ENCODE measurements at regions of chr1 and their contacts with region 1.

Region 1: DNA sequence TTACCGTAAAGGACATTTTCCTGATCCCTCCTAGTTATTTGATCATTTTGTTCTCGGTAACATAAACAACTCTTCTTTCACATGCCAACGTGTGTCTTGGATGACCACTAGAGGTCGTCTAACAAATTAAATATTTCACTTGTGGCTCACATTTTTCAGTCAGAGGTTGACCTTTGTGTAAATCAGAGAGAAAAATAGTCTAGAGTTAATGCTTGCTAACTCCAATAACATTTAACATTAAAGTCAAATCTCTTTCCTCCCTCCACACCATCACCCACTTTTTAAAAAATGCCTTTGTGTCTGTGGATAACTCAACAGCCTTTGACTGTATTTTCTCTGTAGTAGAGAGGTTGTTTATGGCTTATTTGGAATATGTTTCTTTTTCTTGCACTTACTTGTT is 220.5 kb upstream of the B3GALT2 start:
- DNase-seq: peak; percentile 72
- ATAC-seq: peak; percentile 66
- H3K4me3 ChIP-seq: no peak overlapping the region
- H3K27ac ChIP-seq: no peak overlapping the region
- H3K4me1 ChIP-seq: no peaks in the 10 kb centered on the region; the same call in 1 of the 2 replicates
- H3K27me3 ChIP-seq: no peaks in the 10 kb centered on the region
- CTCF ChIP-seq: peak; percentile 71
- POLR2A ChIP-seq: no peak
- RAD21 ChIP-seq: peak; percentile 56

Region 2: DNA sequence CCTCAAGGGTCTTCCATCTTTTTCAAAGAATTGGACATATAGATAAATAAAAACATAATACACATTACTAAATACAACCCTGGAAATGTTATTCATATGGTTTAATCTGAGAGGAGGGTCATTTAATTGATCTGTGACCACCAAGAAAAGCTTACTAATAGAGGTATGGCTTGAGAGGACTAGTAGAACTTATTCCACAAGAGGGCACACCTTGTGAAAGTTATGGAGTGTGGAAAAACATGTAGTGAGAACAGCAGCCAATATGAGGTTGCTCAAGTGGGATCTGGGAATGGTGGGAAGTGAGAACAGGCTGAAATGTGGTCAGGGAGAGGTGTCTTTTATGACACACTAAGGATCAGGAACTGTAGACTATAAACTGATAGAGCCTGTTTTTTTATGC is 753.0 kb after region 1 on chr1:
- CTCF ChIA-PET with region 1: no interaction called
- POLR2A ChIA-PET with region 1: no interaction called
- dilution Hi-C with region 1: no loop called
- in situ Hi-C with region 1: no loop called
- intact Hi-C with region 1: loop called (anchors 10 kb)
- DNase-seq: peak; percentile 10
- ATAC-seq: no peak
- H3K4me3 ChIP-seq: no peak overlapping the region
- H3K27ac ChIP-seq: no peak overlapping the region
- H3K4me1 ChIP-seq: no peaks in the 10 kb centered on the region
- H3K27me3 ChIP-seq: no peaks in the 10 kb centered on the region
- CTCF ChIP-seq: no peak
- POLR2A ChIP-seq: no peak
- RAD21 ChIP-seq: no peak

Region 3: DNA sequence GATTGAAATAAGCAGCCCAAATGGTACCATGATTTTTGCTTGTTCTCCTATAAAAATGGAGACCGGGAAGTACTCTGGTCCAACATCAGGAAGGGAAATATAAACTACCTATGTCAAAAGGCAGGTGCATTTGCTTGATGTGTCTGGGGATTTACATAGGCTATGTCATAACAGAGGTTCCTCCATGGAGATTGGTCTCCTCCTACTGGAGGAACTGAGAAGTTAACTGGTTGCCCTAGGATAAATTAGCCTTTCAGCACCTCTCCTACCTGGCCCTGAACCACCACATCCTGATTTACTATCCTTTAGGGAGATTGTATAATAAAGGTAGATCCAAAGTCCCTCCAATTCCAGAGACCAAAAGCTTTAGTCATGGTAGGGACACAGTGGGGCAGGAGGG is 888.8 kb after region 1 on chr1:
- CTCF ChIA-PET with region 1: no interaction called
- POLR2A ChIA-PET with region 1: no interaction called
- dilution Hi-C with region 1: no loop called
- in situ Hi-C with region 1: no loop called
- intact Hi-C with region 1: loop called (anchors 5 kb)
- DNase-seq: peak; percentile 44
- ATAC-seq: peak; percentile 61
- H3K4me3 ChIP-seq: no peak overlapping the region
- H3K27ac ChIP-seq: no peak overlapping the region
- H3K4me1 ChIP-seq: no peaks in the 10 kb centered on the region
- H3K27me3 ChIP-seq: no peaks in the 10 kb centered on the region
- CTCF ChIP-seq: peak; percentile 57
- POLR2A ChIP-seq: no peak
- RAD21 ChIP-seq: peak; percentile 71

Measured in IMR-90 (cell line).